Astrocyte of the cerebellum (primary cell): ENCODE measurements at regions of chr11 and their contacts with region 1.

Region 1: GRCh38 chr11:64864473-64865285 is 13.7 kb downstream of the EHD1 start:
- DNase-seq: peak; percentile 98
- H3K4me3 ChIP-seq: peak overlapping the region; percentile 6
- CTCF ChIP-seq: peak; percentile 3

Region 2: GRCh38 chr11:64767344-64768299 is 97.1 kb before region 1 on chr11:
- in situ Hi-C with region 1: loop called (anchors 25 kb)
- DNase-seq: peak; percentile 43
- H3K4me3 ChIP-seq: no peak overlapping the region
- CTCF ChIP-seq: peak; percentile 80

Region 3: GRCh38 chr11:64916775-64917662 is 52.3 kb after region 1 on chr11 and contains the start of gene ATG2A:
- in situ Hi-C with region 1: no loop called
- DNase-seq: peak; percentile 99
- H3K4me3 ChIP-seq: peak within 1 kb of the TSS; percentile 75
- CTCF ChIP-seq: no peak